Mammary epithelial cell (primary cell): ENCODE measurements at regions of chr3 and their contacts with region 1.

Region 1: DNA sequence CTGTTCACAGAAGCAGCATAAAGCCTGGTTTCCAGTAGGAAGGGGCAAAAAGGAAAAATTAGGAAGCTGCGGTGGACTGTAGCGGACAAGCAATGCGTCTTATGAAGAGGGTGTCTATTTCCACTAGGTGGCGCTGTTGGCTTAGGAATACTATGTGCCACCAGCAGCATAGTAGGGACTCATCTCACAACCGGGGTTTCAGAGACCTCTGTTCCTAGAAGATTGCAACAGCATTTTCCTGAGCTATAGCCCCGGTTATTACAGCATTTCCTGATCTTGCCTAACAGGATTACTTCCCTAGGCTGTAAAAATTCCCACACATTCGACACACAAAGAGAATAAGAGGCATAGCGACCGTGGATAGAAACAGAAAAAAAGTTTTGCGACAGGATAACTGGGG is 683.0 kb downstream of the TBL1XR1 start:
- DNase-seq: peak; percentile 32
- H3K4me3 ChIP-seq: no peak overlapping the region
- H3K27ac ChIP-seq: no peak overlapping the region
- H3K4me1 ChIP-seq: no peaks in the 10 kb centered on the region
- H3K27me3 ChIP-seq: no peaks in the 10 kb centered on the region
- CTCF ChIP-seq: peak; percentile 27 to 71

Region 2: DNA sequence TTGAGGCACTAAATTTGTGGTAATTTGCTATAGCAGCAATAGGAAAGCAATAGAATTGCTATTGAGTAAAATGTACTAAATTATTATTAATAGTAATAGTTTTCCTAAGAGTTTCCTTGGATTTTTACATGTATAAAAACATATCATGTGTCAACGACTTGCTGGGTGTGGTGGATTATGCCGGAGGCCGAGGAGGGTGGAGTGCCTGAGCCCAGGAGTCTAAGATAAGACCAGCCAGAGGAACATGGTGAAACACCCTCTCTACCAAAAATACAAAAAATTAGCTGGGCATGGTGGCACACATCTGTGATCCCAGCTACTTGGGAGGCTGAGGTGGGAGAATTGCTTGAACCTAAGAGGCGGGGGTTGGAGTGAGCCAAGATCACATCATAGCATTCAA is 66.9 kb before region 1 on chr3:
- CTCF ChIA-PET with region 1: no interaction called
- dilution Hi-C with region 1: loop called (anchors 10 kb)
- in situ Hi-C with region 1: no loop called
- intact Hi-C with region 1: no loop called
- DNase-seq: no peak
- H3K4me3 ChIP-seq: no peak overlapping the region
- H3K27ac ChIP-seq: no peak overlapping the region
- H3K4me1 ChIP-seq: no peaks in the 10 kb centered on the region
- H3K27me3 ChIP-seq: no peaks in the 10 kb centered on the region
- CTCF ChIP-seq: no peak

Region 3: DNA sequence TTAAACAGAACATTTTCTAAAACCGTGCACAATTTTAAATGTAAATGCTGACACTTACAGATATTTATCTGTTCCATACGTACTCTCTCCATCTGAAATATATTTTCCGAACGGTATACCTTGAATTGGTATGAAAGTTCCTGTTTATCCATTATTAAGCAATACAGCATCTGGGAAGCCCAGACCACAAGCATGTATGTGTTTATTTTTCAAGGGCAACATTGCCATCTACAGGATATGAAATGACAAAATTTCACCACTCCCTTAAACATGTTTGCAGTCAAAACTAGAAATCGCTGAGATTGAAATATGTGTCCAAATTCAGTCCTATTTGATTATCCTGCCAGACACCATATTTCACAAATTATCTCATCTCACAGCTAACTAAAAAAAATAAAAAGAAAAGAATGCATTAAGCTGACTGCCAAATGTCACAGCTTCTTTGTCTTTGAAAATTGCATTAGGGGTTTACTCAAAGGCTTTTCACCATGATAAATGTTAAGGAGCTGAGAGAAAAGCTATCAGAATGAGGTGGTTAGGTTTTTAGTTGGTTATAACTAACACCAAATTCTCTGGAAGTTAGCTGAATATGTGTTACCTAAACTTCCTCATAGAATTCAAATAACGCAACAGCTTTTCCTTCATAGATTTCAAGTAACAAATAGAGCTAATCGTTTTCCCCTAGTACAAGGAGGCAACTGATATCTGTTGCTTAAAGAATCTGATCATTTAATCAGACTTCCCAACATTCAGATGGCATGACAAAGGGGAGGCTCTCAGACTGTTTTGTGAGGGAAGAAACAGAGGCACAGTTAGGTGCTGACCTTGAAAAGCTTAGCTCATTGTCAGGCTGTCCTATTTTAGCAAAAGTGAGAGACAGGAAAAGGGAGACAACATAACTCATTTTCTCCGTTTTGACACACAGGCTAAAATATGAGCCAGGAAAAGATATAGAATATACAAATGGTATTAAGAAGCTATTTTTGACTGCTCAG is 149.8 kb after region 1 on chr3:
- CTCF ChIA-PET with region 1: no interaction called
- dilution Hi-C with region 1: no loop called
- in situ Hi-C with region 1: no loop called
- intact Hi-C with region 1: loop called (anchors 1 kb)
- DNase-seq: peak; percentile 34
- H3K4me3 ChIP-seq: no peak overlapping the region
- H3K27ac ChIP-seq: no peak overlapping the region
- H3K4me1 ChIP-seq: no peaks in the 10 kb centered on the region
- H3K27me3 ChIP-seq: no peaks in the 10 kb centered on the region
- CTCF ChIP-seq: peak; percentile 16 to 51

Region 4: DNA sequence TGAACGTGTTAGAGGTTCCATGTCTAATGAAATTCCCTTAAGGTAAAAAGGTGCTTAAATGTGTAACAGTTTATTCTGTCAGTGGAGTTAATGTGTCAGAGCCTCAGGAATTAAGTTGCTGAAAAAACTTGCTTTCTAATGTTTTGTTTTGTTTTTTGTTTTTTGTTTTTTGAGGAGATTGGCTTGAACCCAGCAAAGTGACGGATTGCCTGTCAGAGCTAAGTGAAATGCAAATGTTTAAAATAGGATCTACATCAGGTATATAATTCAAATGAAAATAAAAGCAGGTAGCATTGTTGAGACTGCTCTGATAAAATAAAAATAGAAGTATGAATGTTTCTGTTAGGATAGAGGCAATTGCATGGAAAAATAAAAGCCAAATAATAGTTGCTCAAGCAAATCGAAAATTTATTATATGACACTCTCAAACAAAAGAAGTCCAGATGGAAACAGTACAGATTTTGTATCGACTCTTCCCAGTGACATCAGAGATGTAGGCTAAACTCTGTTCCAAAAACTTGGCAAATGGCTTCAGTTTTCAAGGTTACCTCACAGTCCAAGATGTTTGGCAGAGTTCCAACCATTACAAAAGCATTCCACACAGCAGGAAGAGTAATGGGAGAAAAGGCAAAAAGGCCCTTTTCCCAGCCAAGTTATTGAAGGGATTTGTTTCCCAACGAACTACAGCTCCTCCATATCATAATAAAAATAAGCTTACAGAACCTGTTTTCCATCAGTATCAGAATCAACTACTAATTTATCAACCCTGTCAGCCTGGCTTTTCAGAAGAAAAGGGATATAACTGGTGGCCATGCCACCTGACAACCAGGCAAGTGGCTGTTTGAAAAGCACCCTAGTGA is 392.0 kb after region 1 on chr3:
- CTCF ChIA-PET with region 1: no interaction called
- dilution Hi-C with region 1: loop called (anchors 25 kb)
- in situ Hi-C with region 1: no loop called
- intact Hi-C with region 1: no loop called
- DNase-seq: no peak
- H3K4me3 ChIP-seq: no peak overlapping the region
- H3K27ac ChIP-seq: no peak overlapping the region
- H3K4me1 ChIP-seq: no peaks in the 10 kb centered on the region
- H3K27me3 ChIP-seq: no peaks in the 10 kb centered on the region
- CTCF ChIP-seq: no peak